ENCODE measurements at regions of chr1 and their contacts with region 1.

Region 1: DNA sequence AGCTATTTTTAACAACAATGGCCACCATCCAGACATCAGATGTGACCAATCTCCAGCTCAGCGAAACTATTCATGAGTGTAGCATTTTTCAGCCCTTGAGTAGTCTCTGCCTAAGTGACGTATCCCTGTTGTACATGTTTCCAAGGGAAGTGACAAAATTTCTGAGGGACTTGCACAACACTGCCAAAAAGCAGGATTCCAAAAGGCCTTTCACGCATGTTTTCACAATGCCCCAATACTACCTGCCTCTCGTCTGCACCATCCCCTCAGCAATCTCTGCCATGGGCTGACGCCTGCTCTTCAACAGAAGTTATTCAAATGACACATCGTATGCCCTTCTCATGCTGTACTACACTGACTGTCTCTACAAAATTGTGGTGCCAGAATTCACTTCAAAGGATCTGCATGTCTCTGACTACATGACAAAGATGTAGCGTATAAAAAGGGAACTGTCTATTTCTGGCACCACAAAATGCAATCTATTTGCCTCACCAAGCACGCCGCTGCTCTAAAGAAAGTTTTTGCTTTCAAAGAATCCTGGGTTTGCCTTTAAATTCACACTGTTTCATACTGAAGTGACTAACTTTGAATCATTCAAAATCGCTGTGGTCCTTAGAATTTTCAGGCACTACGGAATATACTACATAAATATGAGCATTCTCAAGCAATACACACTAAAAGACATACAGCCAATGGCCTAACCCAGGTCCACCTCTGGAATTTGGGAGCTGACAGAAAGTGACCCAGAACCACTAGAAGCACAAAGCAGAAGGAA is 32.9 kb downstream of the JAK1 start:
- DNase-seq: peak; percentile 56
- H3K4me3 Mint-ChIP-seq: peak overlapping the region; percentile 33
- H3K27ac Mint-ChIP-seq: peak overlapping the region; percentile 24
- H3K4me1 Mint-ChIP-seq: peaks cover 79% of the 10 kb centered on the region
- H3K27me3 Mint-ChIP-seq: no peaks in the 10 kb centered on the region

Region 2: GRCh38 chr1:64811131-64811530 is 122.4 kb before region 1 on chr1:
- CTCF ChIA-PET with region 1: no interaction called
- intact Hi-C with region 1: no loop called
- DNase-seq: no peak
- H3K4me3 Mint-ChIP-seq: no peak overlapping the region
- H3K27ac Mint-ChIP-seq: no peak overlapping the region
- H3K4me1 Mint-ChIP-seq: no peaks in the 10 kb centered on the region
- H3K27me3 Mint-ChIP-seq: no peaks in the 10 kb centered on the region

Region 3: GRCh38 chr1:64912191-64912590 is 21.3 kb before region 1 on chr1:
- CTCF ChIA-PET with region 1: no interaction called
- intact Hi-C with region 1: loop called (anchors 1 kb)
- DNase-seq: no peak
- H3K4me3 Mint-ChIP-seq: no peak overlapping the region
- H3K27ac Mint-ChIP-seq: no peak overlapping the region
- H3K4me1 Mint-ChIP-seq: peaks cover 90% of the 10 kb centered on the region
- H3K27me3 Mint-ChIP-seq: no peaks in the 10 kb centered on the region

Region 4: DNA sequence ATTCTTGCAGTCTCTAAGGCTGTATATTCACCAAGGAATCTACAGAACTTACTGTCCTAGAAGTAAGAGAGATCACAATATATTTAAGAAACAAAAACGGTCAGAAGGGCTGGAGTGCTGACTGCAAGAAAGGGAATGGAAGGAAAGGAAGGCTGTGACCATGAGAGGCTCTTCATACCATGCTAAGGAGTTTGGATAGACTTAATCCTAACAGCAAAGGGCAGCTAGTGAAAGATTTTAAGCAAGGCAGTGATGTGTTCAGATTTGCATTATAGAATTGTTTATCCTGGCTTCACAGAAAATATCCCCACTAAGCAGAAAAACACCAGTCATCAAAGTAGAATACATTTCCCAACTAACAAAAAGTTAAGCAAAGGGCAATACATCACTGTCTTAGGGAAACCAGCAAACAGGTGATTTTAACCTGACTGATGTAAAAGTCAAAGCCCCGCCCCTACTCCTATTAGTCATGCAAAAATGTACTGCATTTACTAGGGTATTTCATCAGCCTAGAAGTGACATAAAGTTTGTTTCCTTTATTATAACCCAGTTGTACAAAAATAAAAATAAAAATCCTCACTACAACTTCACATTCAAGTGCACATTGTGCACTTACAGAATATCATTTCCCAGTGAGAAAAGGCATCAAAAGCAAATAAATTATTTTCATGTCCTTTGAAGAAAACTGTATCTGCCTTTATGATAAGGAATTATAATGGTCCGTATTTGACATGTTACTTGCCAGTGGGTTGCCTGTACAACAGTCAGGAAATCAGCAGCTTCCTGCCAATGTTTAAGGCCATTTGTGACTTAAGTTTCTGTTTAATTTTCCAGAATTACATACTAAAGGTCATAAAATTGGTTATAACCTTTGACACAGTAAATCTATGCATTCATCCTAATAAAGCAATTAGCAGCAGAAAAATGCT is 15.7 kb after region 1 on chr1:
- CTCF ChIA-PET with region 1: interaction called, 3 read pairs
- intact Hi-C with region 1: loop called (anchors 1 kb)
- DNase-seq: peak; percentile 83
- H3K4me3 Mint-ChIP-seq: peak overlapping the region; percentile 53
- H3K27ac Mint-ChIP-seq: peak overlapping the region; percentile 94
- H3K4me1 Mint-ChIP-seq: peaks cover 79% of the 10 kb centered on the region
- H3K27me3 Mint-ChIP-seq: no peaks in the 10 kb centered on the region

Region 5: DNA sequence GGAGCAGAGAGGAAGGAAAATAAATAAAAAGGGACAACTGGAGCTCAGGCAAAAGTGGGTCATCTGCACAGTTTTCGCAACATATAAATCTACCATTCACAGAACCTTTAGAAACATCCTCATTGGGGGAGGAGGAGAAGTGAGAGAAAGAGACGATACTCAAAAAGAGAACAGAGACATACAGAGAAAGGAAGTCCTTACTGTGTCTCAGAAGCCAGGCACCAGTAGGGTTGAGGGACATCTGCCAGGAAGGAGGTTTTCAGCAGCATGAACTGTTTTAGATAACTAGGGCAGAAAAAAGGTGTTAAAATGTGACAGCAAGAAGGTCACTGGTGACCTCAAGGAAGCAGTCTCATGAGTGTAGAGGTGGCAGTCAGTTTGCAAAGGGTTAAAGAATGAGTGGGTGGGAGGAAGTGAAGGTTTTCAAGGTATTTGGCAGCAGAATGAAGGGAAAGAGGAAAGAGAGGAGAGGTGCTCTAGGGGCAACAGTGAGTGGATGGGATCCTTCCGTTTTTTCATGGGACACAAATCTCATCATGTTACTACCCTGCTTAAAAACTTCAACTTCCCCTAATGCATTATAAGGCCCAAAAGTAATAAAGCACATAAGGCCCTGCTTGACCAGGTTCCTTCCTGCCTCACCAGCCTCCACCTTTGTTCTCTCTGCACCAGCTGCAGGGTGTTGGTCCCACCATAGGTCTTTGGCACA is 23.4 kb after region 1 on chr1:
- CTCF ChIA-PET with region 1: interaction called, 4 read pairs
- intact Hi-C with region 1: loop called (anchors 1 kb)
- DNase-seq: peak; percentile 79
- H3K4me3 Mint-ChIP-seq: no peak overlapping the region
- H3K27ac Mint-ChIP-seq: no peak overlapping the region
- H3K4me1 Mint-ChIP-seq: peaks cover 63% of the 10 kb centered on the region
- H3K27me3 Mint-ChIP-seq: no peaks in the 10 kb centered on the region

Region 6: GRCh38 chr1:65097076-65097475 is 163.6 kb after region 1 on chr1:
- CTCF ChIA-PET with region 1: no interaction called
- intact Hi-C with region 1: no loop called
- DNase-seq: no peak
- H3K4me3 Mint-ChIP-seq: no peak overlapping the region
- H3K27ac Mint-ChIP-seq: no peak overlapping the region
- H3K4me1 Mint-ChIP-seq: no peaks in the 10 kb centered on the region
- H3K27me3 Mint-ChIP-seq: no peaks in the 10 kb centered on the region

Region 7: DNA sequence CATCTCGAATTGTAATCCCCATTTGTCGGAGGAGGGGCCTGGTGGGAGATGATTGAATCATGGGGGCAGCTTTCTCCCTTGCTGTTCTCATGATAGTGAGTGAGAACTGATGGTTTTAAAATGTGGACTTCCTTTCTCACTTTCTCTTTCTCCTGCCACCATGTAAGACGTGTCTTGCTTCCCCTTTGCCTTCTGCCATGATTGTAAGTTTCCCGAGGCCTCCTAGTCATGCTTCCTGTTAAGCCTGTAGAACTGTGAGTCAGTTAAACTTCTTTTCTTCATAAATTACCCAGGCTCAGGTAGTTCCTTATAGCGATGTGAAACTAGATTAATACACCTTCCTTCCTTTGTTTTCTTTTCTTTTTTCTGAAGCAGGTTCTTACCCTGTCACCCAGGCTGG is 389.8 kb after region 1 on chr1:
- CTCF ChIA-PET with region 1: no interaction called
- intact Hi-C with region 1: no loop called
- DNase-seq: peak; percentile 17
- H3K4me3 Mint-ChIP-seq: no peak overlapping the region
- H3K27ac Mint-ChIP-seq: no peak overlapping the region
- H3K4me1 Mint-ChIP-seq: no peaks in the 10 kb centered on the region
- H3K27me3 Mint-ChIP-seq: no peaks in the 10 kb centered on the region